H1 (cell line): ENCODE measurements at regions of chr19 and their contacts with region 1.

Region 1: GRCh38 chr19:14550201-14550784 is 20.9 kb downstream of the TECR start:
- DNase-seq: no peak
- H3K4me3 ChIP-seq: no peak overlapping the region
- H3K27ac ChIP-seq: peak overlapping the region; percentile 15; the same call in 1 of the 2 replicates
- H3K4me1 ChIP-seq: peaks cover 0 to 5% (median 2%) of the 10 kb centered on the region in 4 experiments; a peak in 3 of 7 replicates
- H3K27me3 ChIP-seq: no peaks in the 10 kb centered on the region
- CTCF ChIP-seq: no peak
- EP300 ChIP-seq: no peak
- POLR2A ChIP-seq: no peak
- RAD21 ChIP-seq: no peak

Region 2: DNA sequence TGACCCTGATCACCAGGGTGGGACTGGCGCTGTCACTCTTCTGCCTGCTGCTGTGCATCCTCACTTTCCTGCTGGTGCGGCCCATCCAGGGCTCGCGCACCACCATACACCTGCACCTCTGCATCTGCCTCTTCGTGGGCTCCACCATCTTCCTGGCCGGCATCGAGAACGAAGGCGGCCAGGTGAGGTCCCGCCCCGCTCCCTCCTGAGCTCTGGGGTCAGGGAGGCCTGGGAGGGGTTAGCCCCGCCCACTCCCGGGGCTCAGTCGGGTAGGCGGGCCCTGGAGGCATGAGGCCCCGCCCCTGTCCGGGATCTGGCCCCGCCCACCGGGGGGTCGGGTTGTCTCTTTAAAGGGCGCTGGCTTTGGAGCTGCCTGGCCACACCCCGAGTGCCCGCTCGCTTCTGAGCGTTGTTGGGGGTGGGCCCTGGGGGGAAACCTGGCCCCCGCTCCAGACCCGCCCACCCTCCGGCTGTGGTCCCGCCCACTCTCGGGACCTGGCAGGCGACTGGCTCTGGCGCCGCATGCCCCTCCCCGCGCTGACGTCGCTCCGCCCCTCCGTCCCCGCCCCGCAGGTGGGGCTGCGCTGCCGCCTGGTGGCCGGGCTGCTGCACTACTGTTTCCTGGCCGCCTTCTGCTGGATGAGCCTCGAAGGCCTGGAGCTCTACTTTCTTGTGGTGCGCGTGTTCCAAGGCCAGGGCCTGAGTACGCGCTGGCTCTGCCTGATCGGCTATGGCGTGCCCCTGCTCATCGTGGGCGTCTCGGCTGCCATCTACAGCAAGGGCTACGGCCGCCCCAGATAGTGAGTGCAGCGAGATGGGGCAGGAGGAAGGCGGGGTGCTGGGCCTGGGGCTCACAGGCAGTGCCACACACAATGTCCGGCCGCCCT is 144.3 kb before region 1 on chr19:
- CTCF ChIA-PET with region 1: no interaction called
- POLR2A ChIA-PET with region 1: no interaction called
- DNase-seq: peak; percentile 97 to 99
- H3K4me3 ChIP-seq: peak overlapping the region; percentile 13 to 48 (median 22); a peak in 4 of 8 replicates
- H3K27ac ChIP-seq: peak overlapping the region; percentile 44
- H3K4me1 ChIP-seq: peaks cover 0 to 13% (median 5%) of the 10 kb centered on the region in 4 experiments; a peak in 5 of 7 replicates
- H3K27me3 ChIP-seq: no peaks in the 10 kb centered on the region
- CTCF ChIP-seq: peak; percentile 81 to 97 (median 97)
- EP300 ChIP-seq: no peak
- POLR2A ChIP-seq: peak in 1 of 2 experiments; percentile 65; a peak in 1 of 3 replicates
- RAD21 ChIP-seq: peak; percentile 90 to 96

Region 3: DNA sequence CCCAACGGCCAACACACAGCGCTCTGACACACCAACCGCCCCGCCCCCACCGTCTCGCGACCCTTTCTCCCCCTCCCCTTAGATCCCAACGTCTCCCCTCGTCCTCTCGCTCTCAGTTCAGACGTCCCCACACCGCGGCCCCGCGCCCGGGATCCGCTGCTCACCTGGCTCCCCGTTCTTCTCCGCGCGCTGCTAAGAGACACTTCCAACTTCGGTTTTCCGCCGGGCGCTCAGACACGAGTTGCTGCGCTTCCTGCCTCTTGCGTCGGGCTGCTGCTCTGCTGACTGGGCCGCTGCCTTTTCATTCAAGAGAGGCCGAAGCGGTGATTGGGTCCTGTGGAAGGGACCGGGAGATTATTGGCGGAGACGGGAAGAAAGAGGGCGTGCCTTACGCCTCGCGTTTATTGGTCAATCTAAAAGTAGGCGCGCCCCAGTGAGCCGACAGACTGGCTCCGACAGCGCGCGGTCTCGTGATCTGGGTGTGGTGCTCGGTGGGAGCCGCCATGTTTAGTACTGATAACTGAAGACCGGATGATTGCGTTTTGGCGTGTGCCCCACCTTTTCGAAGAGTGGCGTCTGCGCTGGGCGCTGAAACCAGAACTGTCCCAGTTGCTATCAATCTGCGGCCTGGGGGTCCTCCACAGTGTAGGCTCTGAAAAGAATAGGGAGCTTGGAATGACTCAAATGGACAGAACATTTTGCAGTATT is 131.0 kb before region 1 on chr19 and contains the start of gene DDX39A:
- CTCF ChIA-PET with region 1: no interaction called
- POLR2A ChIA-PET with region 1: no interaction called
- DNase-seq: peak; percentile 90 to 94
- H3K4me3 ChIP-seq: peak within 1 kb of the TSS; percentile 65 to 83 (median 77)
- H3K27ac ChIP-seq: peak within 1 kb of the TSS; percentile 79
- H3K4me1 ChIP-seq: peaks cover 0 to 6% (median 2%) of the 10 kb centered on the region in 4 experiments; a peak in 4 of 7 replicates
- H3K27me3 ChIP-seq: no peaks in the 10 kb centered on the region
- CTCF ChIP-seq: no peak
- EP300 ChIP-seq: no peak
- POLR2A ChIP-seq: peak in 1 of 2 experiments; percentile 89; a peak in 2 of 3 replicates
- RAD21 ChIP-seq: no peak
- total RNA-seq, gene DDX39A: 124 and 139 TPM in 2 replicates

Region 4: DNA sequence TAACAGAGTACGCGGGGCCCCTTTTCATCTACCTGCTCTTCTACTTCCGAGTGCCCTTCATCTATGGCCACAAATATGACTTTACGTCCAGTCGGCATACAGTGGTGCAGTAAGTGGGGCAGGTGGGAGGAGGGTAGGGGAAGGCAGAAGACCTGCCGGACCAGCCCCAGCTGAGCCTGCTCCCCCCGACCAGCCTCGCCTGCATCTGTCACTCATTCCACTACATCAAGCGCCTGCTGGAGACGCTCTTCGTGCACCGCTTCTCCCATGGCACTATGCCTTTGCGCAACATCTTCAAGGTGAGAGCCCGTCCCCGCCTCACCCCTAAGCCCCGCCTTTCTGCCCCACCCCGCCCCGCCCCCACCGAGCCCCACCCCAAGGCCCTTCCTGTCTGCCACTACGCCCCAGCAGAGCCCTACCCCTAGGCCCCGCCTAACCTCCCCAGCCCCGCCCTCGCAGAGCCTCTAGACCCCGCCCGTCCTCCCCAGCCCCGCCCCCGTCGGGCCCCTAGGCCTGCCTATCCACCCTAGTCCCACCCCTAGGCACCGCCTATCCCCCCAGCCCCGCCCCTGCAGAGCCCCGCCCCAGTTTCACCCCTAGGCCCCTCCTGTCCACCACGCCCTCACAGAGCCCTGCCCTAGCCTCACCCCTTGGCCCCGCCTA is 13.8 kb after region 1 on chr19:
- CTCF ChIA-PET with region 1: interaction called, 47 read pairs
- POLR2A ChIA-PET with region 1: interaction called, 6 read pairs
- DNase-seq: peak; percentile 83 to 89
- H3K4me3 ChIP-seq: no peak overlapping the region
- H3K27ac ChIP-seq: no peak overlapping the region; the same call in 1 of the 2 replicates
- H3K4me1 ChIP-seq: peaks cover 0 to 36% (median 32%) of the 10 kb centered on the region in 4 experiments; a peak in 6 of 7 replicates
- H3K27me3 ChIP-seq: no peaks in the 10 kb centered on the region
- CTCF ChIP-seq: no peak
- EP300 ChIP-seq: no peak
- POLR2A ChIP-seq: no peak
- RAD21 ChIP-seq: no peak